MCF 10A (cell line): ENCODE measurements at regions of chr6 and their contacts with region 1.

Region 1: DNA sequence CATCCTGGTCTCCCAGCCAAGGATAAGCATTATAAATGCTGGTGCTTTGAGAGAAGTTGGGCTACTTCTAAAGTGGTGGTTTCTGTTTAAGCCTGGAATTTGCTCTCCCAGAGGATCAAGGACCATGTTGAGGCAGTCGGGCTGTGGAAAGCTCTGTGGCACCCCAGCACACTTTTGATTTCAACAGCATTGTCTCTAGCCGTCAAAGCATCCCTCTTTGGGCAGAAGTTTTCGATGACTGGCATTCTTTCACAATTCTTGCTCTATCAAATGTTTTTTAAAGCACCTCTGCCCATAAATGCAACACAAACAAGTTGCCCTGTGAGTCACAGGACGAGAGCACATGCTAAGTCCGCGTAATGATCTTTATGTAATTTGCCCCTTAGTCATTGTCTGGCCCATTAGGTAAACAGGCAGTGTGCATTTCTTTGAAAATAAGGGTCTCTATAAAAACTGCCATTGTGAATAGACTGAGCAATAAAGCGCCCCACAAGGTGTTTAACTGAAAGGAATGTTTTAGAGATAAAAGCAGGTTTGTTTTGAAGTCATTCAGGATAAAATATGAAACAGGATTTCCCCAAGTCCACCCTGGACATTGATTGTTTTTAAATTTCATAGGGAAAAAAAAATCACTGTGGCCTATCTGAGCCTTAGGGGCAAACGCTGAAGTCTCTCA is 44.7 kb upstream of the FOXQ1 start:
- DNase-seq: peak; percentile 94
- H3K4me3 Mint-ChIP-seq: peak overlapping the region; percentile 40
- H3K27ac Mint-ChIP-seq: peak overlapping the region; percentile 71
- H3K4me1 Mint-ChIP-seq: peaks cover 15% of the 10 kb centered on the region
- H3K27me3 Mint-ChIP-seq: no peaks in the 10 kb centered on the region
- CTCF ChIP-seq: no peak

Region 2: DNA sequence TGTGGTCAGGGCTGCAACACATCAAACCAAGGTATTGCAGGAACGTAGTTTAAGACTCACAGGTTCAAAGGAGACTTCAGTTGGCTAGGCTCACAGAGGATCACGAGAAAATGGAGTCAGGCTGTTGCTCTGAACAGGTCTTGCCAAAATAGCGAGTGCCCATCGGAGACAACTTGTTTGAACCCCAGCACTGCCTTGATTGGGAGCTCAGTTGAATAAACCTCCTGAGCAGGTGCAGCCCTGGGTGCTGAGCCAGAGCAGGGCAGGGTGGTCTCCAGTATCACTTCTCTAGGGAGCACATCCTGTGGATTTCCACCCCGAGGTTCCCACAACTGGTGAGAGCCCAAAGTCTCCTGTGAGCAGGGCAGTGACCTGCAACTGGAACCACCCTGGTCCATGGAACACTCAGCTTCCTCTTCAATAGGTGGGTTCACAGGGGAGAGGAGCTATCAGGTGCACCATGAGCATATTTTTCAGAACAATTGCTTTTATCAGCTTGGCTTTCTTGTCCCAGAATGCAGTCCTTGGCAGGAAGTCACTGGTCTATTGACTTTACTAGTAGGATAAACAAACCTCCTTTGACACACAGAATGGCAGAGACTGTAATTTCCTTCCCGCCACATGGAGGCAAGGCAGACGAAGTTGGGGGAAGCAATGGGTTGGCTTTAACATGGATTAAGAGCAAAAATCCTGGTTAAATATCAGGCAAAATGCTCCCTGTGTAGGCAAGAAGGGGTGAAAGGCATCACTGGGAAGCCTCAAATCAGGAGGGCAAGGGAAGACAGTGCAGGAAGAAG is 223.0 kb before region 1 on chr6:
- CTCF ChIA-PET with region 1: no interaction called
- POLR2A ChIA-PET with region 1: no interaction called
- intact Hi-C with region 1: no loop called
- DNase-seq: no peak
- H3K4me3 Mint-ChIP-seq: no peak overlapping the region
- H3K27ac Mint-ChIP-seq: no peak overlapping the region
- H3K4me1 Mint-ChIP-seq: peaks cover 11% of the 10 kb centered on the region
- H3K27me3 Mint-ChIP-seq: peaks cover 11% of the 10 kb centered on the region
- CTCF ChIP-seq: no peak

Region 3: GRCh38 chr6:1242446-1242845 is 24.7 kb before region 1 on chr6:
- CTCF ChIA-PET with region 1: no interaction called
- POLR2A ChIA-PET with region 1: interaction called, 11 read pairs
- intact Hi-C with region 1: no loop called
- DNase-seq: no peak
- H3K4me3 Mint-ChIP-seq: no peak overlapping the region
- H3K27ac Mint-ChIP-seq: no peak overlapping the region
- H3K4me1 Mint-ChIP-seq: no peaks in the 10 kb centered on the region
- H3K27me3 Mint-ChIP-seq: no peaks in the 10 kb centered on the region
- CTCF ChIP-seq: no peak

Region 4: DNA sequence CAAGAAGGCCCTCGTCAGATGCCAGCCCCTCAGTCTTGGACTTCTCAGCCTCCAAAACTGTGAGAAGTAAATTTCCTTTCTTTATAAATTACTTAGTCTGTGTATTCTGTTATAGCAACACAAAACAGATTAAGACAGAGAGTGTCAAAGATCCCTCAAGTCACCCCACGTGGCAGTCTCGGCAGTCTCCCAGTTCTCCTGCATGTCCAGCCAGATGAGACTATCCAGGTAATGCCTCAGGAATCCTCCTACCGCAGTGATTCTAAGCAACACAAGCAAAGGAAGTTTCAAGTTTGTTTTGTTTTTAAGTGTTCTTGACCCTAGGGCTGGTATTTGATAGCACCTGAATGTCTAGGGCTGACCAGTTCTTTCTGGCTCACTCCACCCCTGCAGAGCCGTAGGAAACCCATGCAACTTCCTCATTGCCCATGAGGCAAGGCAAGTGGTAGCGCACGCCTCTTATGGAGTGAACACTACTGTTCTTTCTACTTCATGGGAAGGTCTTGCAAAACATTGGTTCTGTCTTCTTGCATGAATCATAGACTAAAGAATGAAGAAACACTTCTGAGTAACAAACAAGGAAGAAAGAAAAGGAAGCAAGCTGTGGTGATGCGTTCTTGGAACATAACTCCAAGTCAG is 19.9 kb after region 1 on chr6:
- CTCF ChIA-PET with region 1: no interaction called
- POLR2A ChIA-PET with region 1: interaction called, 18 read pairs
- intact Hi-C with region 1: loop called (anchors 2 kb)
- DNase-seq: peak; percentile 99
- H3K4me3 Mint-ChIP-seq: peak overlapping the region; percentile 66
- H3K27ac Mint-ChIP-seq: peak overlapping the region; percentile 98
- H3K4me1 Mint-ChIP-seq: peaks cover 26% of the 10 kb centered on the region
- H3K27me3 Mint-ChIP-seq: no peaks in the 10 kb centered on the region
- CTCF ChIP-seq: no peak